H1 (cell line): ENCODE measurements at regions of chr11 and their contacts with region 1.

Region 1: DNA sequence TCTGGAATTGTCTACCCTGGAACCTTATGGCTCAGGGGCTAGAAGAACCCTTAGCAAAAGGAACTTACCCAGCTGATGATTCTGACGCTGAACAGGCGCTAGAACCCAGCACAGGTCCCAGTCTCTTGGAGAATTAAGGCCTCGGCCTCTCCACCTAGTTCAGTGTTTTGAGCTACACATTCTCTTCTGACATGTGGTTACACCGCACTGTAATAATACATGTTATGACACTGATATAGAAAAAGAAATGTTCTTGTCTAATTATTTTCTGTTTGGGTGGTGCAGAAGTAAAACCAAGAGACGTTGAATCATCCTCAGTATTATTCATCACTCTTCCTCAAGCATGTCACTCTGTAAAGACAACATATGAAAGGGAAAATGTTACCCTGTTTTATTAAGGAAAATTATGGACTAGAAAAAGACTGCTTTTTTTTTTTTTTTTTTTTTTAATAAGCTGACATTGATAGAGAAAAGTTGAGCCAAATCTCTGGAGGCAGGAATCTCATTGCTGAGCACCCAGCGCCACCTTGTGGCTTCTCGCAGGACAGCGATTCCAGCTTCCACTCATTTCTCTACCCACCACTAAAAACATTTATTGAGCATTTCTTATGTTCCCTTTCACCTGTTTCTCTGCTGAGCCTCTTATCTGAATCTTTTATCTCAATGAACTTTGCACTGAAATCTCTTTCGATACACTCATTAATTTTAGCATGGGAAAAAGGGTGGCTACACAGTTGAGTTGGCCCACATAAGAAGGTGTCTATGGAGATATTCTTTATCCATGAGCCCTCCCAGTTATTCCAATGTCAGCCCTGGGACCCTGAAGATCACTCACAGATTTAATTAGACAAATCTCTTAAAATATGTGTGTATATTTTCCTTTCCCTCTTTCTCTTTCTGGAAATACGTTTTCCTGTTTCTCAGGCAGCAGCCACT is 12.6 kb upstream of the APLNR start:
- DNase-seq: peak in 1 of 2 experiments; percentile 87
- H3K4me3 ChIP-seq: no peak overlapping the region
- H3K27ac ChIP-seq: no peak overlapping the region
- H3K4me1 ChIP-seq: peaks cover 0 to 2% (median 0%) of the 10 kb centered on the region in 4 experiments; a peak in 1 of 7 replicates
- H3K27me3 ChIP-seq: no peaks in the 10 kb centered on the region
- CTCF ChIP-seq: peak; percentile 78 to 86 (median 84)
- EP300 ChIP-seq: no peak
- POLR2A ChIP-seq: no peak
- RAD21 ChIP-seq: peak; percentile 91 to 97

Region 2: GRCh38 chr11:56740107-56740506 is 509.5 kb before region 1 on chr11:
- CTCF ChIA-PET with region 1: no interaction called
- POLR2A ChIA-PET with region 1: no interaction called
- DNase-seq: no peak
- H3K4me3 ChIP-seq: no peak overlapping the region
- H3K27ac ChIP-seq: no peak overlapping the region
- H3K4me1 ChIP-seq: no peaks in the 10 kb centered on the region
- H3K27me3 ChIP-seq: no peaks in the 10 kb centered on the region
- CTCF ChIP-seq: no peak
- EP300 ChIP-seq: no peak
- POLR2A ChIP-seq: no peak
- RAD21 ChIP-seq: no peak

Region 3: GRCh38 chr11:56841210-56841810 is 408.3 kb before region 1 on chr11:
- CTCF ChIA-PET with region 1: interaction called, 119 read pairs
- POLR2A ChIA-PET with region 1: no interaction called
- DNase-seq: peak in 1 of 2 experiments; percentile 62
- H3K4me3 ChIP-seq: no peak overlapping the region
- H3K27ac ChIP-seq: no peak overlapping the region
- H3K4me1 ChIP-seq: no peaks in the 10 kb centered on the region
- H3K27me3 ChIP-seq: no peaks in the 10 kb centered on the region
- CTCF ChIP-seq: peak in 2 of 3 experiments; percentile 70 to 71; a peak in 3 of 4 replicates
- EP300 ChIP-seq: no peak
- POLR2A ChIP-seq: no peak
- RAD21 ChIP-seq: peak; percentile 91 to 93

Region 4: GRCh38 chr11:57111619-57112018 is 138.0 kb before region 1 on chr11:
- CTCF ChIA-PET with region 1: interaction called, 942 read pairs
- POLR2A ChIA-PET with region 1: no interaction called
- DNase-seq: no peak
- H3K4me3 ChIP-seq: no peak overlapping the region
- H3K27ac ChIP-seq: no peak overlapping the region
- H3K4me1 ChIP-seq: no peaks in the 10 kb centered on the region
- H3K27me3 ChIP-seq: no peaks in the 10 kb centered on the region
- CTCF ChIP-seq: no peak
- EP300 ChIP-seq: no peak
- POLR2A ChIP-seq: no peak
- RAD21 ChIP-seq: no peak

Region 5: GRCh38 chr11:57155838-57156607 is 93.6 kb before region 1 on chr11:
- CTCF ChIA-PET with region 1: interaction called, 46 read pairs
- POLR2A ChIA-PET with region 1: no interaction called
- DNase-seq: peak in 1 of 2 experiments; percentile 48
- H3K4me3 ChIP-seq: peak overlapping the region in 1 of 4 experiments; percentile 11; a peak in 1 of 8 replicates
- H3K27ac ChIP-seq: no peak overlapping the region
- H3K4me1 ChIP-seq: peaks cover 3 to 12% (median 7%) of the 10 kb centered on the region in 4 experiments
- H3K27me3 ChIP-seq: peaks cover 0 to 2% (median under 1%) of the 10 kb centered on the region in 4 experiments; a peak in 3 of 7 replicates
- CTCF ChIP-seq: no peak
- EP300 ChIP-seq: no peak
- POLR2A ChIP-seq: no peak
- RAD21 ChIP-seq: no peak

Region 6: DNA sequence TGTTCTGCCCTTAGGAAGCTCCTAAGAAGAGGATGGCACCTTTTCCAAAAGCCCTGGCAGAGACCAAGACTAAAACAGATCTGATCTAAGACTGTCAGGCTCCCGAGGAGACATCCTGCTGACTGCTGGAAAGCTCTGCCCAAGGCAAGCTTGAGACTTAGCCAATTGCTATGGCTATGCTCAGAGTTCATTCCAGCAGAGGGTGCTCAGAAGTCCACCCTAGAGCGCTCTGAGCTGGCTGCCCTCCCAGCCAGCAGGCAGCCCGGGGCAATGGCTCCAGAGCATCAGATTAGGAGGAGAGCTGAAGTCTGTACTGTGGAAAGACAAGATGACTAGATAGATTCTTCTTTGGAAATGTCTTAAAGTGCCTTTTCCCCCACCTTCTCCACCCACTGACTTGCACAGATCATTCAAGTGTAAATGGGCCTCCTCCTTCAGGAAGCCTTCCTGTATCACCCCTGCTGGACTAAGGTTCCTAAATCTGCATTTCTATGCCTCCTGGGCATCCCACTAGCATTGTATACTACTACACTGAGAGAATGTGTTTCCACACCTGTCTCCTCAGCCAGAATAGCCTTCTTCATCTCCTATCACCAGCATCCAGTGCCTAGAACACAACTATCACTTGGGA is 44.5 kb before region 1 on chr11:
- CTCF ChIA-PET with region 1: interaction called, 38 read pairs
- POLR2A ChIA-PET with region 1: no interaction called
- DNase-seq: no peak
- H3K4me3 ChIP-seq: peak overlapping the region in 1 of 4 experiments; percentile 4; a peak in 1 of 8 replicates
- H3K27ac ChIP-seq: no peak overlapping the region
- H3K4me1 ChIP-seq: peaks cover 3 to 16% (median 11%) of the 10 kb centered on the region in 4 experiments; a peak in 5 of 7 replicates
- H3K27me3 ChIP-seq: no peaks in the 10 kb centered on the region
- CTCF ChIP-seq: no peak
- EP300 ChIP-seq: no peak
- POLR2A ChIP-seq: no peak
- RAD21 ChIP-seq: peak in 1 of 2 experiments; percentile 12; a peak in 1 of 4 replicates

Region 7: GRCh38 chr11:57260937-57261783 is 11.5 kb after region 1 on chr11:
- CTCF ChIA-PET with region 1: interaction called, 29 read pairs
- POLR2A ChIA-PET with region 1: no interaction called
- DNase-seq: no peak
- H3K4me3 ChIP-seq: no peak overlapping the region
- H3K27ac ChIP-seq: no peak overlapping the region
- H3K4me1 ChIP-seq: peaks cover 0 to 4% (median 0%) of the 10 kb centered on the region in 4 experiments; a peak in 3 of 7 replicates
- H3K27me3 ChIP-seq: no peaks in the 10 kb centered on the region
- CTCF ChIP-seq: no peak
- EP300 ChIP-seq: no peak
- POLR2A ChIP-seq: no peak
- RAD21 ChIP-seq: no peak